Endothelial cell of umbilical vein (primary cell): ENCODE measurements at regions of chr4 and their contacts with region 1.

Region 1: GRCh38 chr4:78951862-78952472 is 12.7 kb upstream of the PAQR3 start:
- DNase-seq: peak; percentile 42
- H3K4me3 ChIP-seq: no peak overlapping the region
- H3K27ac ChIP-seq: no peak overlapping the region
- H3K4me1 ChIP-seq: no peaks in the 10 kb centered on the region
- H3K27me3 ChIP-seq: peaks cover 5 to 9% of the 10 kb centered on the region in 2 experiments
- CTCF ChIP-seq: peak; percentile 47 to 50
- POLR2A ChIP-seq: no peak

Region 2: GRCh38 chr4:78962597-78963115 is 10.7 kb after region 1 on chr4:
- CTCF ChIA-PET with region 1: interaction called, 15 read pairs
- POLR2A ChIA-PET with region 1: no interaction called
- dilution Hi-C with region 1: no loop called
- intact Hi-C with region 1: no loop called
- DNase-seq: no peak
- H3K4me3 ChIP-seq: no peak overlapping the region
- H3K27ac ChIP-seq: no peak overlapping the region
- H3K4me1 ChIP-seq: no peaks in the 10 kb centered on the region
- H3K27me3 ChIP-seq: no peaks in the 10 kb centered on the region
- CTCF ChIP-seq: no peak
- POLR2A ChIP-seq: no peak

Region 3: GRCh38 chr4:79576429-79576753 is 624.4 kb after region 1 on chr4:
- CTCF ChIA-PET with region 1: interaction called, 9 read pairs
- POLR2A ChIA-PET with region 1: no interaction called
- dilution Hi-C with region 1: no loop called
- intact Hi-C with region 1: loop called (anchors 1 kb)
- DNase-seq: peak; percentile 39
- H3K4me3 ChIP-seq: no peak overlapping the region
- H3K27ac ChIP-seq: no peak overlapping the region
- H3K4me1 ChIP-seq: no peaks in the 10 kb centered on the region
- H3K27me3 ChIP-seq: peaks cover 0 to 2% of the 10 kb centered on the region in 2 experiments
- CTCF ChIP-seq: peak in 1 of 2 donors; percentile 23
- POLR2A ChIP-seq: no peak

Region 4: DNA sequence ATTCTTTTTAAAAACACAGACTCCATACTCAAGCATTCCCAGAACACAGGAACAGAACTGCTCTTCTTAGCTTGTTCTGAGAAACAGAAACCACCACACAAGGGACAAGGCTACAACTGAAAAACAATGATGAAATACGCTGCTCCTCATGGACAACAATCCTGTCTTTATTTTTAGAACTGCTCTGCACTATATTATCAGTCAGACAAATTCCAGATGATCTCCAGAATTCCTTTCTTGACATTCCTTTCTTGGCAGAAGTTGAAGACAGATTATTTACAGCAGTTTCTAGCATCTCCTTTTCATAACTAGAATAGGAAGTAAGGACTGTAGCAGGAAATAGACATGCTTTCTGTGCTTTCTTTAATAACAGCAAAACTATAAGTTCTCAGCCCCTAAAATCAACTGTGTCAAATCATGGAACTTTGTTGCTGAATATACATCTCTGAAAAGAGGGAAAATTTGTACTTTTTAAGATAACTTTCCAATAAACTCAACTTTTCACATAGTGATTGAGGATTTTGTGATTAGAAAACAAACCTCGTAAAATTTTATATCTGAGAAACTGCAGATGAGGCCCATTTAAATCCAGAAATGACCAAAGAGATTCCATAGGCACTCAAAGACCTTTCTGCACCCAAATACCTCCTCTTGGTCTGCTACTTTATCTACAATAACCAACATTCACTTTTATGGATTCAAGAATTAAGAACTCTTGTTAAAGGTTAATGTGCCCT is 1085.2 kb after region 1 on chr4:
- CTCF ChIA-PET with region 1: no interaction called
- POLR2A ChIA-PET with region 1: no interaction called
- dilution Hi-C with region 1: no loop called
- intact Hi-C with region 1: loop called (anchors 10 kb)
- DNase-seq: peak; percentile 64
- H3K4me3 ChIP-seq: peak overlapping the region in 1 of 3 experiments; percentile 37
- H3K27ac ChIP-seq: peak overlapping the region; percentile 70
- H3K4me1 ChIP-seq: peaks cover 38% of the 10 kb centered on the region
- H3K27me3 ChIP-seq: no peaks in the 10 kb centered on the region
- CTCF ChIP-seq: no peak
- POLR2A ChIP-seq: no peak

Region 5: GRCh38 chr4:80215449-80216052 is 1263.6 kb after region 1 on chr4:
- CTCF ChIA-PET with region 1: interaction called, 19 read pairs
- POLR2A ChIA-PET with region 1: no interaction called
- dilution Hi-C with region 1: no loop called
- intact Hi-C with region 1: loop called (anchors 1 kb)
- DNase-seq: peak; percentile 44
- H3K4me3 ChIP-seq: no peak overlapping the region
- H3K27ac ChIP-seq: no peak overlapping the region
- H3K4me1 ChIP-seq: no peaks in the 10 kb centered on the region
- H3K27me3 ChIP-seq: peaks cover 20 to 47% of the 10 kb centered on the region in 2 experiments
- CTCF ChIP-seq: peak; percentile 33 to 38
- POLR2A ChIP-seq: no peak